ENCODE measurements at regions of chr16 and their contacts with region 1.

Region 1: GRCh38 chr16:62225697-62226280 is 189.6 kb upstream of the CDH8 start:
- DNase-seq: peak; percentile 77 to 96
- H3K4me3 ChIP-seq: no peak overlapping the region
- H3K4me1 ChIP-seq: peaks cover 11% of the 10 kb centered on the region
- H3K27me3 ChIP-seq: no peaks in the 10 kb centered on the region

Region 2: DNA sequence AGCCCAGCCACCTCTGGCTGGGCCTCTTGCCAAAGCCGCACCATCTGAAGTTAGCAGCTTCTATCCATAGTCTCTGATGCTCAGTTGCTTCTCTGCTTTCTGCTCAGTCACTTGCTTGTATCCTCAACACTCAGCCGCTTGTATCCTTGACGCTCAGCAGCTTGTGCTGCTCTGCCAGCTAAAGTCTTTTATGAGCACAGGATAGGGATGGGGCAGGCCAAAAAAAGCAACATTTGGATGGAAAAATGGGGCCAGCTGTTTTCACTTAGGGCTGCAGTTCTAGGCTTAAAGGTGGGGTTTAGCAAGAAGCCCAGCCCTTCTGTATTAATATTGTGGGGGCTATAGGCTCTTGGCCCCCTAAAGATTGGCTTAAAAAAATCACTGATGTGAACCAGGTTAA is 929.0 kb before region 1 on chr16:
- in situ Hi-C with region 1: no loop called
- DNase-seq: no peak
- H3K4me3 ChIP-seq: no peak overlapping the region
- H3K4me1 ChIP-seq: no peaks in the 10 kb centered on the region
- H3K27me3 ChIP-seq: no peaks in the 10 kb centered on the region

Region 3: GRCh38 chr16:62711797-62712196 is 486.0 kb after region 1 on chr16:
- in situ Hi-C with region 1: loop called (anchors 25 kb)
- DNase-seq: no peak
- H3K4me3 ChIP-seq: no peak overlapping the region
- H3K4me1 ChIP-seq: peaks cover 13% of the 10 kb centered on the region
- H3K27me3 ChIP-seq: no peaks in the 10 kb centered on the region

Measured in HAP-1 (cell line).